ENCODE measurements at regions of chr11 and their contacts with region 1.

Region 1: GRCh38 chr11:118046051-118046963 is 30.6 kb upstream of the TMPRSS4 start:
- DNase-seq: peak; percentile 50
- ATAC-seq: peak; percentile 76
- H3K4me3 Mint-ChIP-seq: peak overlapping the region; percentile 9
- H3K27ac Mint-ChIP-seq: peak overlapping the region; percentile 77
- H3K4me1 Mint-ChIP-seq: peaks cover 91% of the 10 kb centered on the region
- H3K27me3 Mint-ChIP-seq: no peaks in the 10 kb centered on the region

Region 2: GRCh38 chr11:118002541-118003423 is 43.5 kb before region 1 on chr11:
- CTCF ChIA-PET with region 1: interaction called, 168 read pairs
- POLR2A ChIA-PET with region 1: interaction called, 112 read pairs
- DNase-seq: peak; percentile 70
- ATAC-seq: peak; percentile 52
- H3K4me3 Mint-ChIP-seq: peak overlapping the region; percentile 72
- H3K27ac Mint-ChIP-seq: peak overlapping the region; percentile 98
- H3K4me1 Mint-ChIP-seq: peaks cover 100% of the 10 kb centered on the region
- H3K27me3 Mint-ChIP-seq: no peaks in the 10 kb centered on the region

Region 3: DNA sequence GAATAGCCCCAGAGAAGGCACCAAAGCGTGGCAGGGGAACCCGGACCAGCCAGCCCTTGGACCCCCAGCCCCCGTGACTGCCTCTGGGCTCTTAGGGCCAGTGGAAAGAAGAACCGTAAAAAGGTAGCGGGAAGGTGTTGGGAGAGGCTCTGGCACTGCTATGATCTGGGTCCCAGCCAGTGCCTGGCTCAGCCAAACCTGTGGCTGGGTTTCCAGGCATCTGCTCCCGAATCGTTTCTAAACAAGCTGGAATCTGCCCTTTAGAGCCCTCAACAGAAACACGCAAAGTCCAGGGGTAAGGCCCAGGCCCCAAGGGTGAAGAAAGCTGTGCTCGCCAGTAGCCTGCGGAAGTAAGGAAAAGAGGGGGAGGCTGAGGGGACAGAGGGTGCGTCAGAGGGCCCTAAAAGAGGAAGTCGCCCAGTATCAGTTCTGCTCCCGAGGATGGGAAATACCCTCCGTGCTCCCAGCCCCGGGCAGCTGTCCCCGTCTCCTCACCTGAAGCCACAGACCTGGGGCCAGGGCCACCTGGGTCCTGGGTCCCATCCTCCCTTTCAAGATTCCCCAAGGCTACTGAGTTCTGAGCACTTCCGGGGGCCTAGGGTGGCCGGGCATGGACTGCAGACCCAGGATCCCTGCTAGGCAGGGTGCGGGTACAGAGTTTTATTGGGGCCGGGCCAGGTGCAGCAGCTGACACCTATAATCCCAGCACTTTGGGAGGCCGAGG is 35.4 kb before region 1 on chr11:
- CTCF ChIA-PET with region 1: interaction called, 168 read pairs
- POLR2A ChIA-PET with region 1: interaction called, 33 read pairs
- DNase-seq: no peak
- ATAC-seq: no peak
- H3K4me3 Mint-ChIP-seq: no peak overlapping the region
- H3K27ac Mint-ChIP-seq: peak overlapping the region; percentile 90
- H3K4me1 Mint-ChIP-seq: peaks cover 100% of the 10 kb centered on the region
- H3K27me3 Mint-ChIP-seq: no peaks in the 10 kb centered on the region